GM13977 (cell line): ENCODE measurements at regions of chr17 and their contacts with region 1.

Region 1: GRCh38 chr17:38430316-38430715 is 2.1 kb downstream of the ARHGAP23 start:
- DNase-seq: no peak
- CTCF ChIP-seq: no peak

Region 2: GRCh38 chr17:38485146-38485468 is 54.8 kb after region 1 on chr17:
- in situ Hi-C with region 1: loop called (anchors 10 kb)
- DNase-seq: no peak
- CTCF ChIP-seq: no peak